ENCODE measurements at regions of chr1 and their contacts with region 1.

Region 1: DNA sequence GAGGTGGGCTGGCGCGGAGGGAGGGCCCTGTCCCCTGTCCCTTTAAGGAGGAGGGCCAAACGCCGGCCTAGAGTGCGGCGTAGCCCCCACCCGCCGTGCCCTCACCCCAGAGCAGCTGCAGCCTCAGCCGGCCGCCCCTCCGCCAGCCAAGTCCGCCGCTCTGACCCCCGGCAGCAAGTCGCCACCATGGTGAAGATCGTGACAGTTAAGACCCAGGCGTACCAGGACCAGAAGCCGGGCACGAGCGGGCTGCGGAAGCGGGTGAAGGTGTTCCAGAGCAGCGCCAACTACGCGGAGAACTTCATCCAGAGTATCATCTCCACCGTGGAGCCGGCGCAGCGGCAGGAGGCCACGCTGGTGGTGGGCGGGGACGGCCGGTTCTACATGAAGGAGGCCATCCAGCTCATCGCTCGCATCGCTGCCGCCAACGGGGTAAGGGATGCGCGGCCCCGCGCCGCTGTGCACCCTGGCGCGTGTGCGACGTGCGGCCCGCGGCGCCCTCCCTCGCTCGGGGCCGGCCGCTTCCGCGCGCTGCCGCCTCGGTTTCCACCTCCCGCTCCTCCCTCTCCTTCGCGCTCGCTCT is at the start of gene PGM1:
- DNase-seq: peak; percentile 55 to 91 (median 73)
- ATAC-seq: peak; percentile 77
- H3K4me3 ChIP-seq: peak within 1 kb of the TSS; percentile 87
- H3K4me3 Mint-ChIP-seq: peak within 1 kb of the TSS; percentile 99
- H3K27ac ChIP-seq: peak within 1 kb of the TSS; percentile 82 to 87
- H3K27ac Mint-ChIP-seq: peak within 1 kb of the TSS; percentile 99
- H3K4me1 ChIP-seq: peaks cover 21% of the 10 kb centered on the region
- H3K4me1 Mint-ChIP-seq: peaks cover 45% of the 10 kb centered on the region
- H3K27me3 ChIP-seq: no peaks in the 10 kb centered on the region
- H3K27me3 Mint-ChIP-seq: no peaks in the 10 kb centered on the region
- CTCF ChIP-seq: no peak
- total RNA-seq, gene PGM1: 5.4 to 5.6 TPM

Region 2: GRCh38 chr1:63367215-63368103 is 225.9 kb before region 1 on chr1 and contains the start of gene ALG6:
- CTCF ChIA-PET with region 1: no interaction called
- POLR2A ChIA-PET with region 1: no interaction called
- intact Hi-C with region 1: loop called in 1 of 2 experiments (anchors 1 kb)
- DNase-seq: peak; percentile 64 to 94 (median 88)
- ATAC-seq: peak; percentile 79
- H3K4me3 ChIP-seq: peak within 1 kb of the TSS; percentile 98
- H3K4me3 Mint-ChIP-seq: peak within 1 kb of the TSS; percentile 97
- H3K27ac ChIP-seq: peak within 1 kb of the TSS; percentile 52 to 60
- H3K27ac Mint-ChIP-seq: peak within 1 kb of the TSS; percentile 87
- H3K4me1 ChIP-seq: peaks cover 20% of the 10 kb centered on the region
- H3K4me1 Mint-ChIP-seq: peaks cover 34% of the 10 kb centered on the region
- H3K27me3 ChIP-seq: peaks cover 0 to 2% of the 10 kb centered on the region in 2 experiments
- H3K27me3 Mint-ChIP-seq: peaks cover 7% of the 10 kb centered on the region
- CTCF ChIP-seq: peak; percentile 12
- total RNA-seq, gene ALG6: 10.6 to 11.2 TPM

Region 3: DNA sequence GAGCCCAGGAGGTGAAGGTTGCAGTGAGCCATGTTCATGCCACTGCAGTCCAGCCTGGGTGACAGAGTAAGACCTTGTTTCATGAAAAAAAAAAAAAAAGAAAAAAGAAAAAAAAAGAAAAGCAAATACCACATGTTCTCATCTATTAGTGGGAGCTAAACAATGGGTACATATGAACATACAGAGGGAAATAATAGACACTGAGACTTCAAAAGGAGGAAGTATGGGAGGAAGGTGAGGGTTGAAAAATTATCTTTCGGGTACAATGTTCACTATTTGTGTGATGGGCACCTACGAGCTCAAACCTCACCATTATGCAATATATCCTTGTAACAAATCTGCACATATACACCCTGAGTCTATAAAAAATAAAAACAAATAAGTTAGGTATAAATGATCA is 76.8 kb before region 1 on chr1:
- CTCF ChIA-PET with region 1: no interaction called
- POLR2A ChIA-PET with region 1: no interaction called
- intact Hi-C with region 1: no loop called
- DNase-seq: no peak
- ATAC-seq: no peak
- H3K4me3 ChIP-seq: no peak overlapping the region
- H3K4me3 Mint-ChIP-seq: no peak overlapping the region
- H3K27ac ChIP-seq: no peak overlapping the region
- H3K27ac Mint-ChIP-seq: no peak overlapping the region
- H3K4me1 ChIP-seq: no peaks in the 10 kb centered on the region
- H3K4me1 Mint-ChIP-seq: peaks cover 13% of the 10 kb centered on the region
- H3K27me3 ChIP-seq: no peaks in the 10 kb centered on the region
- H3K27me3 Mint-ChIP-seq: no peaks in the 10 kb centered on the region
- CTCF ChIP-seq: no peak

Region 4: GRCh38 chr1:63575340-63575826 is 18.0 kb before region 1 on chr1:
- CTCF ChIA-PET with region 1: interaction called, 5 read pairs
- POLR2A ChIA-PET with region 1: interaction called, 6 read pairs
- intact Hi-C with region 1: loop called in 1 of 2 experiments (anchors 1 kb)
- DNase-seq: peak in 4 of 14 experiments; percentile 19 to 50 (median 44)
- ATAC-seq: no peak
- H3K4me3 ChIP-seq: no peak overlapping the region
- H3K4me3 Mint-ChIP-seq: no peak overlapping the region
- H3K27ac ChIP-seq: no peak overlapping the region
- H3K27ac Mint-ChIP-seq: no peak overlapping the region
- H3K4me1 ChIP-seq: no peaks in the 10 kb centered on the region
- H3K4me1 Mint-ChIP-seq: no peaks in the 10 kb centered on the region
- H3K27me3 ChIP-seq: no peaks in the 10 kb centered on the region
- H3K27me3 Mint-ChIP-seq: no peaks in the 10 kb centered on the region
- CTCF ChIP-seq: peak; percentile 87

Region 5: GRCh38 chr1:63731117-63732043 is 138.0 kb after region 1 on chr1:
- CTCF ChIA-PET with region 1: no interaction called
- POLR2A ChIA-PET with region 1: no interaction called
- intact Hi-C with region 1: no loop called
- DNase-seq: no peak
- ATAC-seq: no peak
- H3K4me3 ChIP-seq: no peak overlapping the region
- H3K4me3 Mint-ChIP-seq: no peak overlapping the region
- H3K27ac ChIP-seq: no peak overlapping the region
- H3K27ac Mint-ChIP-seq: no peak overlapping the region
- H3K4me1 ChIP-seq: no peaks in the 10 kb centered on the region
- H3K4me1 Mint-ChIP-seq: no peaks in the 10 kb centered on the region
- H3K27me3 ChIP-seq: no peaks in the 10 kb centered on the region
- H3K27me3 Mint-ChIP-seq: peaks cover 5% of the 10 kb centered on the region
- CTCF ChIP-seq: no peak